Upper lobe of right lung (tissue), 1 donor: ENCODE measurements at regions of chr19 and their contacts with region 1.

Region 1: GRCh38 chr19:48588670-48589399 is 17.7 kb upstream of the SPACA4 start:
- DNase-seq: peak; percentile 96
- ATAC-seq: peak; percentile 90
- H3K4me3 ChIP-seq: peak overlapping the region; percentile 39
- H3K27ac ChIP-seq: no peak overlapping the region
- H3K4me1 ChIP-seq: peaks cover 6% of the 10 kb centered on the region
- H3K27me3 ChIP-seq: no peaks in the 10 kb centered on the region
- CTCF ChIP-seq: peak; percentile 95

Region 2: DNA sequence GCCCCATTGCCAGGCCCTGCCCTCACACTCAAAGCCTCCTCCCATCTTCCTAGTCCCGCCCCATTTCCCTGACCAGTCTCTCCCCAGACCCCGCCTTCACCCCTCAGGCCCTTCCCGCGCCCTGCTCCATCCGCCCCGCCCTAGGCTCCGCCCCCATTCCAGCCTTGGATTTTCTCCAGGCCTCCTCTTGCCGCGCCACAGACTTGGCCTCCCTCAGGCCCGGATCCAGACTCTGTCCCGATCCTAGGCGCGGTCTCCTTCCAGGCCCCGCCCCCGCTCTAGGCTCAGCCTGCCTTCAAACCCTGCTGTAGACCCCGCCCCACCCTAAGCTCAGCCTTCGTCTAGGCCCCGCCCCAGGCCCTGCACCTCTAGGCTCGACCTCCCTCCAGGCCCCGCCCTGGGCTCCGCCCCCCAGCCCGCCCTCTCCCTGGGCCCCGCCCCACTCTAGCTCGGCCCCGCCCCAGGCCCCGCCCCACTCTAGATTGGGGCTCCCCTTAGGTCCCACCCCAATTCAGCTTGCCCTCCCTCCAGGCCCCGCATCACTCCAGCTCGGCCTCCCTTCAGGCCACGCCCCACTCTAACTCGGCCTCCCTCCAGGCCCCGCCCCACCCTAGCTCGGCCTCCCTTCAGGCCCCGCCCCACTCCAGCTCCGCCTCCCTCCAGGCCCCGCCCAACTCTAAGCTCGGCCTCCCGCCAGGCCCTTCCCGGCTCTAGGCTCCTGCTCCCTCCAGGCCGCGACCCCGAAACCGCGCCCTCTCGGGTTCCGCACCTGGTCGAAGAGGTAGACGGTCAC is 95.7 kb before region 1 on chr19:
- intact Hi-C with region 1: loop called (anchors 10 kb)
- DNase-seq: peak; percentile 98
- ATAC-seq: peak; percentile 90
- H3K4me3 ChIP-seq: peak overlapping the region; percentile 53
- H3K27ac ChIP-seq: peak overlapping the region; percentile 65
- H3K4me1 ChIP-seq: peaks cover 21% of the 10 kb centered on the region
- H3K27me3 ChIP-seq: peaks cover 11% of the 10 kb centered on the region
- CTCF ChIP-seq: no peak